A549 (cell line): ENCODE measurements at regions of chr2 and their contacts with region 1.

Region 1: DNA sequence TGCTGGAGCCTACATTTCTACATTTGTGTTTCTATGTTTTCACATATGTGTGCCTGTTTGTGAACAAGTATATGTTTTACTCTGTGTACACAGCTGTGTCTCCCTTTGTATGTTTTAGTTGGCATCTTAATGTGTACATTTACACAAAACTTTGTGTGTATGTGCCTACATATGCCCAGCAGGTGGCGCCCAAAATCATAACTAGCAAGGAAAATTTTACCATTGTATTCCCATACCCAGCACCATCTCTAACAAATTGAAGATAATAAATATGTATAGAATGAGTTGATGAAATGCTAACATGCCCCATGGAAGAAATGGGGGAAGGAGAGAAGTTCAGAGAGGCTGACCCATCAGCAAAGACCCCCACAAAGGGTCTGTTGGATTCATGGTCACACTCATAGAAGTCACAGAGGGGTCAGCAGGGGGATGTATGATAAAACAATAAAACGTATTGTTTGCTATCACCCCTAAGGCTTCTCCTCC is 48.1 kb downstream of the PKDCC start:
- DNase-seq: peak; percentile 49 to 84
- ATAC-seq: peak; percentile 67 to 76; a peak in 5 of 6 replicates
- H3K4me3 ChIP-seq: no peak overlapping the region
- H3K27ac ChIP-seq: peak overlapping the region; percentile 8 to 70; a peak in 3 of 6 replicates
- H3K4me1 ChIP-seq: peaks cover 31% of the 10 kb centered on the region
- CTCF ChIP-seq: peak; percentile 99
- EP300 ChIP-seq: no peak
- POLR2A ChIP-seq: no peak
- RAD21 ChIP-seq: peak; percentile 98 to 99

Region 2: DNA sequence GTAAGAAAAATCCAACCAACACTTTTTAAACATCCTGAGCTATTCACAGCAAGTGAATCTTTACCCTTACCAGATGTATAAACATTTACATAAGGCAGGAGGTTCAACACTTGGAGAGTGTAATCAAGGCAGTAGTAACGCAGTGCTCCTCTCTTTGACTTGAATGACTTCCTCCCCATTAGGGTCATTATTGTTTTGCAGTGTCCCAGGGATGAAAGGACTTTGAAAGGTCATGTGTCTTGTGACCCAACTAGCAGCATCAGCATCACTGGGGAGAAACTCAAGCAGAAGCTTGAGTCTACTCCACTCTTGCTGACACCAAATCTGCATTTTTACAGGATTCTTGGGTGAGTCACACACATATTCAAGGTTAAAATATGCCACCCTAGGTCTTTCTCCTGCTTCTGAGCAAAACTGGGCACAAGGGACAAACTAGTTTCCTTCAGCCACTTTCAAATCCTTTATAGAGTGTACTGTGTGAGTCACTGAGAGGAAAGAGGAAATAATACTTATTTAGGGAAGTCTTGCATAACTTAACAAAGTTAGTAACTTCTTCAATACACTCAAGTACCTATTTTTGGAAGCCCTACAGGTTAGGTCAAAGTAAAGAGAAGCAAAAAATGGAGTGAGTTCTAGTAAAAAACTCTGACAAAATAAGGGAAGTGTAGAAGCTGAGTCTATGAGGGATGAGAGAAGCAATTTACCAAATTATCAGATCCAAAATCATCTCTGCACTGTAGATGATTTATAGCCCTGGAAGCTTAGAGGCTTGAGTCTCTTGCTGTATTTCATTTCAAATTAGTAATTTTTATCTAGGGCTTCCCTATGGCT is 22.2 kb after region 1 on chr2:
- CTCF ChIA-PET with region 1: interaction called, 21 read pairs
- POLR2A ChIA-PET with region 1: no interaction called
- DNase-seq: peak in 1 of 2 experiments; percentile 86
- ATAC-seq: peak; percentile 90 to 91
- H3K4me3 ChIP-seq: no peak overlapping the region
- H3K27ac ChIP-seq: peak overlapping the region; percentile 60 to 63
- H3K4me1 ChIP-seq: peaks cover 34% of the 10 kb centered on the region
- CTCF ChIP-seq: no peak
- EP300 ChIP-seq: peak in 1 of 2 experiments; percentile 67; a peak in 2 of 5 replicates
- POLR2A ChIP-seq: no peak
- RAD21 ChIP-seq: peak; percentile 34 to 40; a peak in 4 of 5 replicates

Region 3: DNA sequence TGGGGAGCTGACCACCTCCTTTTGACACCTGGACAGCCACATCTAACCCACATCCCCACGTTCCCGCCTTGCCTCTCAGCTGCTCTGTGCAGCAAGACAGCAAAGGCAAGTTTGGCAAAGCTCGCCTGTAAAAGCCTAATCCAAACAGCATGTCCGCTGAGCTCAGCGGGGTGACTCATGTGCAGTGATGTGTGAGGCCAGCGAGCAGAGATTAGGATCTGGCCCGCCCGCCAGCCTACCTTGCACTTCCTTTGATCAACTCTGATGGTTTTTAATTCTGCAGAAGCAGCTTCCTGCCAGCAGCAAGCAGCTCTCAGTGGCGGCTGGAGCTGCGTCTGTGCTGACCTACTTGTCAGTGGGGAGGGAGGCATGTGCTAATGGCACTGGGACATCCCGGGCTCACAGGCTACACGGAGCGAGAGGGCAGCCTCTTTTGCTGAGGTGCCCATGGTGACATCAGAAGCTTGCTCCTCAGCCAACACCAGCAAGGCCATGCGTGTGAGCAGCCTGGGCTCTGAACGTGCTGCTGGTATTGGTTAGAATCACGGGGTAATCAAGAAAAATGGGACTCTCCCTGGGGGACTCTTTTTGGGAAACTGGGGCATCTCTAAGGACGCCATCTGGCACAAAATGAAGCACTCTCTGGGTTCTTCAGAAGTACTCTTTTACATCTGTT is 37.1 kb after region 1 on chr2:
- CTCF ChIA-PET with region 1: interaction called, 25 read pairs
- POLR2A ChIA-PET with region 1: no interaction called
- DNase-seq: peak; percentile 89 to 94
- ATAC-seq: peak; percentile 91 to 93
- H3K4me3 ChIP-seq: peak overlapping the region; percentile 18; the same call in 1 of the 3 replicates
- H3K27ac ChIP-seq: peak overlapping the region; percentile 75 to 87
- H3K4me1 ChIP-seq: peaks cover 72% of the 10 kb centered on the region
- CTCF ChIP-seq: no peak
- EP300 ChIP-seq: peak; percentile 72 to 80; a peak in 3 of 5 replicates
- POLR2A ChIP-seq: no peak
- RAD21 ChIP-seq: peak in 1 of 2 experiments; percentile 41; a peak in 4 of 5 replicates

Region 4: DNA sequence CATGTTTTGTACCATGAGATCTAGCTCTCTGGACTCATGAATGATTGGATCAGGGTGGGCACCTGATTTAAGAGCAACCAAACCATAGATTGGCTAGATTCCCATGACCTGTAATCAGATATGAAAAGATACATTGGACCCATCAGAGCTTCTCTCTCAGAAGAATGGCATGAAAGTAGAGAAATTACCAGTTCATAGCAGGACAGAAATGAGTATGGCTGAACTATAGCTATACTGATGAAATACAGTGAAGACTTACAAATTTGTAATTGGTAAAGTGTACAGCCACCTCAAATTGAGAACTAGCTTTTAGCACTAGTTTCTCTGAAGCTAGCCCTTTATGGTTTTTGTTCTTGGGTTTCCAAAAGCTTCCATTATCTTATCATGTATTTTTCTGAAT is 54.2 kb after region 1 on chr2:
- CTCF ChIA-PET with region 1: interaction called, 10 read pairs
- POLR2A ChIA-PET with region 1: no interaction called
- DNase-seq: no peak
- ATAC-seq: no peak
- H3K4me3 ChIP-seq: no peak overlapping the region
- H3K27ac ChIP-seq: no peak overlapping the region
- H3K4me1 ChIP-seq: peaks cover 12% of the 10 kb centered on the region
- CTCF ChIP-seq: no peak
- EP300 ChIP-seq: no peak
- POLR2A ChIP-seq: no peak
- RAD21 ChIP-seq: no peak

Region 5: DNA sequence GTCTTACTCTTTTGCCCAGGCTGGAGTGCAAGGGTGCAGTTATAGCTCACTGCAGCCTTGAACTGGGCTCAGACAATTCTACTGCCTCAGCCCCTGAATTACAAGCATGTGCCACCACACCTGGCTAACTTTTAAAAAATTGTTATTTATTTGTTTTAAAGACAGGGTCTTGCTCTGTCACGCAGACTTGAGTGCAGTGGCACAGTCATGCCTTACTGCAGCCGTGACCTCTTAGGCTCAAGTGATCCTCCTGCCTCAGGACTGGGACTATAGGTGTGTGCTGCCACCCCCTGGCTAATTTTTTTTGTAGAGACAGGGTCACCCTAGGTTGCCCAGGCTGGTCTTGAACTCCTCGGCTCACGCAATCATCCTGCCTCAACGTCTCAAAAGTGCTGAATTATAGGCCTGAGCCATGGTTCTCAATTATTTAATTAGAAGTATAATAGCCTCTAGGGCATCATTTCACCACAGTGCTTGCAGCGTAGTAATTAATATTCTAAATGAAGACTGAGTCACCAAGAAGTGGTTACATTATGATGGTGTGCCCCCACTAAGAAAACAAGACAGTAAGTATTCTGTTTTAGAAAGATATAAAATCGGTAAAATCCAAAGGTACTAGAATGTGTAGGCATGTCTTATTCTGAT is 142.8 kb after region 1 on chr2:
- CTCF ChIA-PET with region 1: interaction called, 133 read pairs
- POLR2A ChIA-PET with region 1: no interaction called
- DNase-seq: peak in 1 of 2 experiments; percentile 76
- ATAC-seq: peak; percentile 97 to 98
- H3K4me3 ChIP-seq: no peak overlapping the region
- H3K27ac ChIP-seq: 0 out of 6 replicates have a peak overlapping the region, but pooled peaks of 1 of the 2 experiments have one; percentile 5
- H3K4me1 ChIP-seq: peaks cover 29% of the 10 kb centered on the region
- CTCF ChIP-seq: peak; percentile 80
- EP300 ChIP-seq: no peak
- POLR2A ChIP-seq: no peak
- RAD21 ChIP-seq: peak; percentile 93 to 95